Adrenal gland (tissue), 19 donors: ENCODE measurements at regions of chr10 and their contacts with region 1.

Region 1: DNA sequence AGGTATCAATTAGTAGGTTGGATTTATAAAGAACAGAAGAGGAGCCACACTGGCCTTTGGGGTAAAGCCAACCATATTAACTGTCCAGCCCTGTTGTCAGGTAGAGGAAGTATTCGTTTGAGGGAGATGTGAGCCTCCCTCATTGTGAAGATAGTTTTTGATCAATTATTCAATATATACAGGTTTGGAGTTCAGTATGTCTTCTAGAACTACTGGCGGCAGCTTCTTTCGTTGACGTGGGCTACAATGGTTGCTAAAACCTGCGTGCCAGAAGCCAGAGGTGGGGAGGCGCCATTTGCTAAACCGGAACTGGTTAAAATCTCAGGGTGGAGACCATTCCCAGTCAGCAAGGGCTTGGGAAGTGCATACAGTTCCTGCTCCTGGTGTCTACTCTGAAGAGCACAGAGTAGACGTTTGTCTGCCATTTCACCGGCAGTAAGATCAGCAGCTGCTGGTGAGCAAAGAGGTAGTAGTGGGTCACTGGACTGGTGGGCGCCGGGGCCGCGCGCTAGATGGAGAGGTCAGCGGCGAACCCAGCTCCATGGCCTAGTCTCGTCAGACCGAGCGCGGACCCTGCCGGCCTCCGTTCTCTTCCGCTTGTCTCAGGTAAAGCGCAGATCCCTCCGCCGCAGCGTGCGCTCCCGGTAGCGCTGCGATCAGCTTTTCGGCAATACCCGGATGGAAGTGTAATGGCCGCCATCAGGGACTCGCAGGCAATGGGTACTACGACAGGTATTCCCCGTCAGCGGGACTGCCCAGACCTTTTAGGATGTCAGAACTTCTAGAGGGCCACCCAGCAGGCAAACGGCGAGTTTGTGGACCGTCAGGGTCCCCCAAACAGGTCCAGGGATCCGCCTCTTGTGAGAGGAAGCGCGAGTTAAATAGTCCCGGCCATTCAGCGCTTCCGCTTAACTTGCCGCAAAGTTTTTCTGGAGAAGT is at the start of gene ZNF518A:
- DNase-seq: peak; percentile 91 to 97 (median 95)
- H3K4me3 ChIP-seq: peak within 1 kb of the TSS; percentile 62 to 88 (median 72)
- H3K27ac ChIP-seq: peak within 1 kb of the TSS; percentile 95 to 97 (median 96)
- H3K4me1 ChIP-seq: peaks cover 10 to 11% of the 10 kb centered on the region in 2 donors
- H3K27me3 ChIP-seq: peaks cover 12% of the 10 kb centered on the region
- CTCF ChIP-seq: no peak
- POLR2A ChIP-seq: peak; percentile 14 to 23
- total RNA-seq, gene ZNF518A: 6.3 to 56.0 (median 17.8) TPM

Region 2: DNA sequence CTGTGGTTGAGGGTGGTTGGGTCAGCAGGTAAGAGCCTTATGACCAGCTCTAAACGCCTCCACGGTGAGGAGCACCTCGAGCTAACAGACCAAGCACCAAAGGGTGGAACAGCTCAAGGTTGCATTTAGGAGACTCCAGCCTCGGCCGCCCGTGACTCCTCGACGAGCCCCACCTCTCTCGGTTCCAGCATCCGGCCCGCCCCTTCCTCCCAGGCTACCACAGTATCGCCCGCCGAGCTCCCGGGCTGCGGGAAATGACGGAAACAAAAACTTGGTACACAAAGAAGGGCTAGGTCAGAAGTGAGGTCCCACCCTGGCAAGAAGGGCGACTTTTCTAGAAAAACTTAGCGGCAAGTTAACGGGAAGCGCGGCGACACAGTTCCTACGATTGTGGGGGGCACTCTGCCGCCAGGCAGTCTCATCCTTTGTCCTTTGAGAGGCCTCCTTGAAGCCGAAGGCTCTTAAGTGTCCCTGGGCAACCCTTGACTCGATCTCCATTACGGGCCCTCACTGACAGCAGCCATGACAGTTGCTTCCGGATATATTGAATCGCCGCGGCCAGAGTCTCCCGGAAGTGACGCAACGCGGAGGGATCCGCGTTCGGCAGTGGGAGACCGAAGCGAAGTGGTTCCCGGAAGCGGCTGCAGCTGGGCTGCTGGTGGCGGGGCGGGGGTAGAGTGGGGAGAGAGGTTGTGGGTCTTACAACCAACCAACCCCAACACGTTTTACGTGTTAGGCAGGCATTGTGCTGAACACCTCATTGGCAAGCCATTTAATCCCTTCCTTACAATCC is 39.8 kb before region 1 on chr10:
- intact Hi-C with region 1: loop called in 1 of 2 experiments (anchors 5 kb)
- DNase-seq: peak; percentile 89 to 98 (median 95)
- H3K4me3 ChIP-seq: peak overlapping the region; percentile 8 to 78 (median 34)
- H3K27ac ChIP-seq: peak overlapping the region; percentile 8 to 94 (median 89)
- H3K4me1 ChIP-seq: no peaks in the 10 kb centered on the region
- H3K27me3 ChIP-seq: peaks cover 12% of the 10 kb centered on the region
- CTCF ChIP-seq: no peak
- POLR2A ChIP-seq: peak; percentile 23 to 53